ENCODE measurements at regions of chr5 and their contacts with region 1.

Region 1: DNA sequence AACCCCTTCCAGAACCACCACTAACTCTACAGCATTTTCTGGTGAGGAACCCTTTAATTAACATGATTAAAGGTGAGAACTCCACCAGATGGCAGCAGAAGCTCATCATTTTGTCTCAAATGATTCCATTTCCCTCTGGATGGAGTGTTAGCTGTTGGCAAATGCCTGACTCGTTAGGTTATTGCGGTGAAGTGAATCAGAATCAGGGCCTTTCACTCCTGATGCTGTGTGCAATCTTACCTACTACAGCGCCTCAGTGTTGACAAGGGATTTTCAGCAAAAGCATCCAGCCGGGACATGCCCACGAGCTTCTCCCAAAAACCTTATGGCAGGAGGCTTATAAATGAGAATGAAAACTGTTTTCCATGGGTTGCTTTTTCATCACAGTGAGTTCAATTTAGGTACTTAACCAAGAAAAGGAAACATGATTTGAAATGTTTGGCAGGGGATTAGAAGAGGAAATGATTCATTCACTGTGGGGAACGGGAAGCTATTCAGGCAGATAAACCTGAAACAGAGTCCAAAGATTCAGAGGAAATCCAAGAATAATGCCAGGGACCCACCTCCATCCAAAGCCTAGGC is 48.0 kb upstream of the CAST start:
- DNase-seq: no peak

Region 2: GRCh38 chr5:96509721-96510333 is 104.4 kb before region 1 on chr5:
- intact Hi-C with region 1: no loop called
- DNase-seq: no peak

Region 3: GRCh38 chr5:96633820-96634219 is 19.6 kb after region 1 on chr5:
- intact Hi-C with region 1: no loop called
- DNase-seq: no peak

Region 4: GRCh38 chr5:96662725-96663513 is 48.7 kb after region 1 on chr5:
- intact Hi-C with region 1: no loop called
- DNase-seq: peak; percentile 98

Region 5: DNA sequence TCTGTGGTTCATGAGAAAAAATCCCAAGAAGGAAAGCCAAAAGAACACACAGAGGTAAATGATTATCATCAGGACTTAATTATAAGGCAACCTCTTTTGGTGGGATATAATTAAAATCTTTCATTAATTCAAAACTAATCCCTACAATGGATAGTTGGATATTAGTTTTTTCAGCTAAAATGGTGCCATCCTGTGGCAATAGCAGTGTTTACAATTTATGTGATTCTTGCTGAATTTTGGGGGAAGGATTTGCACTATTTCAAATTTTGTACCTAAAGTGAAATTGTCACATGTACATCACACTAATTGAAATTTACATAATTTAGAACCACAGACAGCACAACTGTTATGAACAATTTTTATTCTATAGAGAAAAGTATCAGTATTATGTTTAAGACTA is 115.0 kb after region 1 on chr5:
- intact Hi-C with region 1: loop called in 1 of 2 experiments (anchors 10 kb)
- DNase-seq: no peak

Region 6: GRCh38 chr5:98454904-98455303 is 1840.7 kb after region 1 on chr5:
- intact Hi-C with region 1: loop called in 1 of 2 experiments (anchors 5 kb)
- DNase-seq: no peak

Measured in posterior vena cava (tissue), 2 donors.